ENCODE measurements at regions of chr7 and their contacts with region 1.

Region 1: GRCh38 chr7:105399043-105399725 is 10.5 kb upstream of the SRPK2 start:
- DNase-seq: peak in 1 of 2 experiments; percentile 32
- ATAC-seq: peak; percentile 44 to 51; a peak in 3 of 6 replicates
- H3K4me3 ChIP-seq: no peak overlapping the region
- H3K27ac ChIP-seq: no peak overlapping the region
- H3K4me1 ChIP-seq: peaks cover 14% of the 10 kb centered on the region
- CTCF ChIP-seq: peak; percentile 49
- EP300 ChIP-seq: no peak
- POLR2A ChIP-seq: no peak
- RAD21 ChIP-seq: peak; percentile 40 to 51; a peak in 4 of 5 replicates

Region 2: DNA sequence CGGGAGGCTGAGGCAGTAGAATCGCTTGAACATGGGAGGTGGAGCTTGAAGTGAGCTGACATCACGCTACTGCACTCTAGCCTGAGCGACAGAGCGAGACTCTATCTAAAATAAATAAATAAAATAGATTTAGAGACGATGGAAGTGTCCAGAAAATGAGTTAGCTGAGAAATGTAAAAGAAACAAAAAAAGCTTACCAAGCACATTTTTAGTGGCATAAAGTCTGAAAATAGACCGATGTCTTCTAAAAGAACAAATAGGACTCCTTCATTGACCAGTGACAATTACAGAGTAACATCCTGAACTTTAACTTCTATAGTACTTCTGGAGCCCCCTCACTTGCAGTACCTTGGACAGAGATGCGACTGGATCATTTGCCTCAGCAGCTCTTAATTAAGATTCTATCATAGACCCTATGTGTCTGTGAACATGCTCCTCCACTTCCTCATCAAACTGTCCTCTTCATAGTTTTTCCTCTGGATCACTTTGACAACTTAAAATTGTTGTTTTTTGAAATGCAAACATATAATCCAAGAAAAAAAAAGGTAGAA is 14.8 kb after region 1 on chr7:
- CTCF ChIA-PET with region 1: interaction called, 22 read pairs
- POLR2A ChIA-PET with region 1: no interaction called
- DNase-seq: no peak
- ATAC-seq: no peak
- H3K4me3 ChIP-seq: no peak overlapping the region
- H3K27ac ChIP-seq: no peak overlapping the region
- H3K4me1 ChIP-seq: no peaks in the 10 kb centered on the region
- CTCF ChIP-seq: no peak
- EP300 ChIP-seq: no peak
- POLR2A ChIP-seq: no peak
- RAD21 ChIP-seq: no peak

Region 3: DNA sequence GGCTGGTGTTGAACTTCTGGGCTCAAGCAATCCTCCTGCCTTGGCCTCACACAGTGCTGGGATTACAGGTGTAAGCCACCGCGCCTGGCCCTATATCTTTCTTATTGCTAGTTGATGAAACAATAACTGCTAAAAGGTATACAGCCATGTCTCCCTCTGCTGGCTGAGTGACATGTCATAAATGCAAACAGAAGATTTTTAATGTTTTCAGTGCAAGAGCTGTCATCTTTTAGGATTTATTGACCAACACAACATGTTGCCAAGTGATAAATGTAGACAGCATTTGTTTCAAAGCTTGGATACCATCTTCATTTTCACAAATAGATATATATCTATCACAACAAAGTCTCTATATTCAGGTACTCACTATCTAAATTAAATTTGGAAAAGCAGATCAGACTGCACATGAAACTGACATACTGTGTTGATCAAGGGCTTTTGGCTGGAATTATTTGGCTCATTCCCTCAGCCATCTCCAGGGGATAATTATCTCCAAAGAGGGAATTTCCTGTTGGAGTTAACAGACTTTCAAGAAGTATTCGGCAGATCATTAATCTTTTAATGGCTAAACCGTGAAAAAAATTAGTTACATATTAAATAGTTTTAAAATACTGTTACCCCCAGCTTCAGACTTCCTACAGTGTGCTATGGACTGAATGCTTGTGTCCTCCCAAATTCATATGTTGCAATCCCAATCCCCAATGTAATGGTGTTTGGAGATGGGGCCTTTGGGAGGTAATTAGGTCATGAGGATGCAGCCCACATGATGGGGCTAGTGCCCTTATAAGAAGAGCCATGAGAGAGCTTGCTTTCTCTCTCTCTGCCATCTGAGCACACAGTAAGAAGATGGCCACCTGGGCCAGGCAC is 30.8 kb after region 1 on chr7:
- CTCF ChIA-PET with region 1: interaction called, 22 read pairs
- POLR2A ChIA-PET with region 1: no interaction called
- DNase-seq: peak; percentile 66 to 75
- ATAC-seq: peak; percentile 90
- H3K4me3 ChIP-seq: no peak overlapping the region
- H3K27ac ChIP-seq: no peak overlapping the region
- H3K4me1 ChIP-seq: peaks cover 6% of the 10 kb centered on the region; the same call in 1 of the 3 replicates
- CTCF ChIP-seq: peak; percentile 67
- EP300 ChIP-seq: no peak
- POLR2A ChIP-seq: no peak
- RAD21 ChIP-seq: peak; percentile 66 to 81

Region 4: GRCh38 chr7:105589356-105590077 is 190.3 kb after region 1 on chr7:
- CTCF ChIA-PET with region 1: interaction called, 42 read pairs
- POLR2A ChIA-PET with region 1: no interaction called
- DNase-seq: peak; percentile 79 to 82
- ATAC-seq: peak; percentile 99
- H3K4me3 ChIP-seq: no peak overlapping the region
- H3K27ac ChIP-seq: no peak overlapping the region
- H3K4me1 ChIP-seq: no peaks in the 10 kb centered on the region
- CTCF ChIP-seq: peak; percentile 85
- EP300 ChIP-seq: no peak
- POLR2A ChIP-seq: no peak
- RAD21 ChIP-seq: peak; percentile 87 to 91

Region 5: DNA sequence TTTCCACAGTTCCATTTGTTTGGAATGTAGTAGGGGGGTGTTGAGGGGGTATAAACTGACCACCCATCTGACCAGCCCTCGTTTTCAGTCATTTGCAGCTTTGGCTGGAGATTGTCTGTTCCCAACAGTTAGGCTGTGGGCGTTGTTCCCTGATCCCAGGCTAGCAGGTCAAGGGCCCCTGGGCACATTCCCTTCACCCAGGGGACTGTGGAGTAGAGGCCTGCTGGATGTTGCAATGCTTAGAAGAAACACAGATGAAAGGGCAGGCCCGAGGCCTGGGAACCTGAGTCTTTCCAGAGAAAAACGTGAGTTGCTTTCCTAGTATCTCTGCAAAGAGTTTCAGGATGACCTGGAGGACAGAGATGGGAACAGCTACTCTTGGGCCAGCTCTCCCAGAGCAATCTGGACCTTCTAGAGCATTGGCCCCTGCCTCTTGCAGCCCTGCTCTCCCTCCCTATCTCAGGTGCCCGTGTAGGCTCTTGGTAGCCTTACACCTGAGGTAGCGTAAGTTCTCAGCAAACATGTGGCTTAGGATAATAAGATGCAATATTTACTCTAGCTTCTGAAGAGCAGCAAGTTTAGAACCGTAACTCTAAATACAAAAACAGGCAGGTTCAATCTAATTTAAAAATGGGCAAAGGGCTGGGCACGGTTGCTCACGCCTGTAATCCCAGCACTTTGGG is 281.5 kb after region 1 on chr7:
- CTCF ChIA-PET with region 1: no interaction called
- POLR2A ChIA-PET with region 1: no interaction called
- DNase-seq: no peak
- ATAC-seq: no peak
- H3K4me3 ChIP-seq: no peak overlapping the region
- H3K27ac ChIP-seq: no peak overlapping the region
- H3K4me1 ChIP-seq: peaks cover 14% of the 10 kb centered on the region
- CTCF ChIP-seq: no peak
- EP300 ChIP-seq: no peak
- POLR2A ChIP-seq: no peak
- RAD21 ChIP-seq: no peak